ENCODE measurements at regions of chr9 and their contacts with region 1.

Region 1: DNA sequence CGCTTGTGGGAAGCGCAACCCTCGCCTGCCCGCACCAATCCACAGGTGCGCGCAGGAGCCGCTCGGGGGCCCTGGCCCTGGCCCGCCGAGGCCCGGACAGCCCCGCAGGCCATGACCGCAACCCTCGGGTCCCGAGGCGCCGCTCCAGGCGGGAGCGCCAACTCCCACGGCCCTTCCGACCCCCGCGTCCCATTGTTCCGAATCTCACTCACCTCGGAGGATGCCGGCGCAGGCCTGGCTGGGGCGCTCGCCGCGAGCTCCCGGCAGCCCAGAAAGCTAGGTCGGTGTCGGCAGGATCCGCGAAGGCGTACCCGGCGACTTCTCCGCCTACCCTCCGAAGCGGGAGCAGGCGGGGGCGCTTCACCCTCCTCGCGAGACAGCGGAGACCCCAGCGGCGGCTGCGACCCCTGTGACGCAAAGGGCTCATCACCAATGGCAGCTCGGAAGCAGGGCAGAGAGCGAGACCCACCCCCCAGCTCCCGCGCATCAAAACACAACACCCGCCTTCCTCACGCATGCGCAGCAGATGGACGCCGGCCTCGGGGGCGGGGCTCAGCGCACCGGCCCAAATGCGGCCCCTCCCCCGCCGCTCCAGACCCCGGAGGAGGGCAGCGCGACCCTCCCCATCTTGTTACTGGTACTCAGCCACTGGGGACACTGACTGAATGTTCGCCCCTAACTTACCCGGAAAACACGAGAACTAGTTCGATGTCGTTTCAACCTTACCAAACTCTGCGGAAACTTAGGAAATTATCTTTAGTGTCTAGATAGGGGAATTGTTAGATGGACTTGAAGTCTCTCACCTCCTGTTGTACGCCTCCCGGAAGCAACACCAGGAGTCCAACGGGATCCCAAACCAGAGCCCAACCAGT is 1.3 kb upstream of the SMIM27 start:
- DNase-seq: peak; percentile 74
- ATAC-seq: peak; percentile 57
- H3K4me3 ChIP-seq: peak overlapping the region; percentile 89
- H3K27ac ChIP-seq: peak overlapping the region; percentile 76
- H3K4me1 ChIP-seq: 0 out of 2 replicates have a peak, but pooled peaks cover 9% of the 10 kb centered on the region
- H3K27me3 ChIP-seq: no peaks in the 10 kb centered on the region
- CTCF ChIP-seq: no peak

Region 2: DNA sequence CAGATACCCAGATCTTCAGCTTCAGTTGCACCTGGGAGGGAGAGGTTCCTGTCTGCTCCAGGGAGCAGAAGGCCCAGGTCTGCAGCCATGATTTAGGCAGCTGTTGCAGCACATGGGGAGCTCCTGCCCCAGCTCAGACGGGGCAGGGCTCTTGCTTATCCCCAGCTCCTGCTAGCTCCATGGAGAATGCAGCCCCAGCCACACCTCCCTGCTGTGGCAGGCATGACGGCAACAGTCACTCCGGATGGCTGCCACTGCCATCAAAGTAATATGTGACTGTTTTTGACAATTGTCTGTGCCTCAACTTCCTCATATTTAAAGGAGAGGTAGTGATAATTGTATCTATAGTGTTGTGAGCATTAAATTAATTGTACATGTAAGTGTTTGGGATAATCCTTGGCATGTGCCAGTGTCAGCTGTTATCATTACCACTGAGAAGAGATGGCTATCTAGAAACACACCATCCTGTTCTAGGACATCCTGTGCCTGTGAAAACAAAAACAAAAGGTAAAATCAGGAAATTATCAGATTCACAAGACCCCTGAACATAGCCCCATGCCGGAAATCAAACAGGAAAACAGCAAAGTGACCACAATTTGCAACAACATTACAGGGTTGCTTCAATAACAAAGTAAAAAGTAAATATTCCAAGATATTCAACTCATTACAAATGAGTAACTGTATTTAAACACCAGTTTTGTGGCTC is 1215.1 kb before region 1 on chr9:
- CTCF ChIA-PET with region 1: no interaction called
- POLR2A ChIA-PET with region 1: no interaction called
- intact Hi-C with region 1: no loop called
- DNase-seq: no peak
- ATAC-seq: no peak
- H3K4me3 ChIP-seq: no peak overlapping the region
- H3K27ac ChIP-seq: no peak overlapping the region
- H3K4me1 ChIP-seq: no peaks in the 10 kb centered on the region
- H3K27me3 ChIP-seq: no peaks in the 10 kb centered on the region
- CTCF ChIP-seq: no peak

Region 3: GRCh38 chr9:32384364-32385151 is 166.2 kb before region 1 on chr9 and contains the start of gene ACO1:
- CTCF ChIA-PET with region 1: no interaction called
- POLR2A ChIA-PET with region 1: no interaction called
- intact Hi-C with region 1: loop called (anchors 1 kb)
- DNase-seq: peak; percentile 81
- ATAC-seq: peak; percentile 94
- H3K4me3 ChIP-seq: peak within 1 kb of the TSS; percentile 93
- H3K27ac ChIP-seq: no peak within 1 kb of the TSS
- H3K4me1 ChIP-seq: 0 out of 2 replicates have a peak, but pooled peaks cover 4% of the 10 kb centered on the region
- H3K27me3 ChIP-seq: no peaks in the 10 kb centered on the region
- CTCF ChIP-seq: no peak
- total RNA-seq, gene ACO1: 20.8 and 26.0 TPM in 2 replicates

Measured in PC-3 (cell line).